Activated naive CD4-positive, alpha-beta T cell treated with anti-CD3 and anti-CD28 coated beads for 36 hours (primary cell): ENCODE measurements at regions of chr15 and their contacts with region 1.

Region 1: GRCh38 chr15:92808978-92809879 is 90.9 kb upstream of the CHD2 start:
- DNase-seq: peak; percentile 99
- H3K4me3 Mint-ChIP-seq: peak overlapping the region; percentile 87
- H3K27ac Mint-ChIP-seq: peak overlapping the region; percentile 99
- H3K4me1 Mint-ChIP-seq: peaks cover 46% of the 10 kb centered on the region
- H3K27me3 Mint-ChIP-seq: no peaks in the 10 kb centered on the region

Region 2: DNA sequence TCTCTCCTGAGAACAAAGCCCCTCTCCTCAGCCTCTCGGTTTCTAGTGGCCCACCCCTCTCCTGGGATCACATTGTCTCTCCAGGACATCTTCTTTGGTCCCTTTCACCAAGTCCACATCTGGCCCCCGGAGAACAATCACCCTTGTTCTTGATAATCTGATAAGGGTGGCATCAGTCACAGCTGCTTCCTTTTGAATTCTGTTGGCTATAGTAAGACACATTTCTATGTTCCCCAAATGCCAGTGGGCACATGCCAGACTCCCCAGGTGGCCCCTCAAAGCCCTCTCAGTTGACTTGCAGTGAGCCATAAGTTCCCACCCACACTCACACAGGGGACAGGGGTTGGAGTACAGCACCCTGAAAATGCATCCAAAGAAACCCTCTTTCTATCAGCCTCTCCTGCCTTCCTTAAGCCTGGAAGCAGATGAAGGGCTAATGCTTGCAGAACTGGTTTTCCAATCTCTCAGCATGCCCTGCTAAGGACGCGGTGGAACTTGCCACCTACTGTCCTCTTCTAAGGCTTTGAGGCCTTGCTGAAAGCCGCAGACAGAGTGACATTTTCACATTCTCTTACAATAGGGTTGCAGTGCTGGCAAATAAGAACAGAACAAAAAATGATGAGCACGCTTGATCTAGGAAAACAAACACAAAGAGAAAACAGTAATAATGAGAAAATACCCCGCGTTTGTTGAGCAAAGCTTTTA is 1057.0 kb before region 1 on chr15:
- CTCF ChIA-PET with region 1: no interaction called
- intact Hi-C with region 1: no loop called
- DNase-seq: no peak
- H3K4me3 Mint-ChIP-seq: no peak overlapping the region
- H3K27ac Mint-ChIP-seq: no peak overlapping the region
- H3K4me1 Mint-ChIP-seq: no peaks in the 10 kb centered on the region
- H3K27me3 Mint-ChIP-seq: peaks cover 9% of the 10 kb centered on the region

Region 3: GRCh38 chr15:92820236-92821021 is 11.2 kb after region 1 on chr15:
- CTCF ChIA-PET with region 1: interaction called, 9 read pairs
- intact Hi-C with region 1: loop called (anchors 1 kb)
- DNase-seq: peak; percentile 91
- H3K4me3 Mint-ChIP-seq: peak overlapping the region; percentile 79
- H3K27ac Mint-ChIP-seq: peak overlapping the region; percentile 98
- H3K4me1 Mint-ChIP-seq: peaks cover 73% of the 10 kb centered on the region
- H3K27me3 Mint-ChIP-seq: no peaks in the 10 kb centered on the region

Region 4: GRCh38 chr15:92831655-92832328 is 22.6 kb after region 1 on chr15:
- CTCF ChIA-PET with region 1: interaction called, 38 read pairs
- intact Hi-C with region 1: loop called (anchors 1 kb)
- DNase-seq: peak; percentile 95
- H3K4me3 Mint-ChIP-seq: peak overlapping the region; percentile 64
- H3K27ac Mint-ChIP-seq: peak overlapping the region; percentile 96
- H3K4me1 Mint-ChIP-seq: peaks cover 64% of the 10 kb centered on the region
- H3K27me3 Mint-ChIP-seq: no peaks in the 10 kb centered on the region

Region 5: GRCh38 chr15:92845126-92845508 is 35.9 kb after region 1 on chr15:
- CTCF ChIA-PET with region 1: interaction called, 3 read pairs
- intact Hi-C with region 1: loop called (anchors 1 kb)
- DNase-seq: no peak
- H3K4me3 Mint-ChIP-seq: peak overlapping the region; percentile 71
- H3K27ac Mint-ChIP-seq: peak overlapping the region; percentile 96
- H3K4me1 Mint-ChIP-seq: peaks cover 85% of the 10 kb centered on the region
- H3K27me3 Mint-ChIP-seq: no peaks in the 10 kb centered on the region

Region 6: GRCh38 chr15:92881802-92882696 is 72.8 kb after region 1 on chr15:
- CTCF ChIA-PET with region 1: interaction called, 17 read pairs
- intact Hi-C with region 1: loop called (anchors 1 kb)
- DNase-seq: peak; percentile 100
- H3K4me3 Mint-ChIP-seq: peak overlapping the region; percentile 95
- H3K27ac Mint-ChIP-seq: peak overlapping the region; percentile 98
- H3K4me1 Mint-ChIP-seq: peaks cover 51% of the 10 kb centered on the region
- H3K27me3 Mint-ChIP-seq: no peaks in the 10 kb centered on the region

Region 7: DNA sequence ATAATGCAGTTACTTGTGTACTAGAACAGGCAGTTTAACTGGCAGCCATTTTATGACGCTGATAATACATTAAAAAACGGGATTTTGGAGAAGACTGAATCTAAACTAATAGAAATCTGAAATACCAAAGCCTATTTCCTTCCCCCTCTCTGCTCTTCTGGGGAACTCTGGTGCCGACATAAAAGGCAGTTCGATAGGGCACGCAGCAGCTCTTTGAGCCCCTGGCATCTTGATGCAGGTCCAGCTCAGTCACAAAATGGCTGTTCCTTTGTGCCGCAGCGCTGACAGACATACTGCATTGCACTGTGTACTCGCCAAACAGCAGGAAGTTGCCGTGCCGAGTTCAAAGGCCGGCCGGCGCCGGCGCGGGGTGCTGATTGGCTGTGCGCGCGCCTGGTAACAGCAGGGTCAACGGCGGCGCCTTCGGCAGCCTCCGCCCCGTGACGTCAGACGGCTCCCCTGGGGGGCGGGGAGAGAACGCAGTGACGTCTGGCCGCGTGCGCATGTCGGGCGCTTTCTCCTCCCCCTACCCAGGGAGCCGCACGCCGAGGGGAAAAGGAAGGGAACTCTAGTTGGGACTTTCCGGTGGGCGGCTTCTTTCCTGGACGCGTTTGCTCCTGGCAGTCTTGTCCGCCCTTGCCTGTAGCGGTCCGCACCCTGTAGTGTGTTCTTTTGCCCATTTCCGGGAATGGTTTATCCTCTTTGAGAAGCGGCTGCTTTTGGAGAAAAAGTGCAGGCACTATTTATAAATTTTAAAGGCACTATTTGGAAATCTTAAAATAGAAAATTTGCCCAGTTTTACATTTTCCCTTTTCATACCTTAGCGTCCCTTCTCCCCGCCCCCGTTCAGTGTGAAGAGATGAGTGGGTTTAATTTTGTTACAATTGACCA is 95.0 kb after region 1 on chr15:
- CTCF ChIA-PET with region 1: interaction called, 30 read pairs
- intact Hi-C with region 1: loop called (anchors 1 kb)
- DNase-seq: peak; percentile 99
- H3K4me3 Mint-ChIP-seq: peak overlapping the region; percentile 92
- H3K27ac Mint-ChIP-seq: peak overlapping the region; percentile 100
- H3K4me1 Mint-ChIP-seq: peaks cover 50% of the 10 kb centered on the region
- H3K27me3 Mint-ChIP-seq: peaks cover 4% of the 10 kb centered on the region

Region 8: DNA sequence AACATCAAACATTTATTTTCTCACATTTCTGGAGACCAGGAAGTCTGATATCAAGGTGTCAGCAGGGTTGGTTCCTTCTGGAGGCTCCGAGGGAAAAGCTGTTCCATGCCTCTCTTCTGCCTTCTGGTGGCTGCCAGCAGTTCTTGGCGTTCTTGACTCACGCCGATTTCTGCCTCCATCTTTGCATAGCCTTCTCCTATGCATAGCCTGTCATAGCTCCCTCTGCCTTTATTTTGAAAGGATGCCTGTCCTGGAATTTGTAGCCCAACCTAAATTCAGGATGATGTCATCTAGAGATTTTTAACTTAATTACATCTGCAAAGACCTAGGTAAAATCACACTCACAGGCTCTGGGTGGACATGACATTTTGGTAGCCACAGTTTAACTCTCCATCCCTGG is 209.4 kb after region 1 on chr15:
- CTCF ChIA-PET with region 1: no interaction called
- intact Hi-C with region 1: loop called (anchors 2 kb)
- DNase-seq: no peak
- H3K4me3 Mint-ChIP-seq: no peak overlapping the region
- H3K27ac Mint-ChIP-seq: peak overlapping the region; percentile 65
- H3K4me1 Mint-ChIP-seq: peaks cover 69% of the 10 kb centered on the region
- H3K27me3 Mint-ChIP-seq: no peaks in the 10 kb centered on the region

Region 9: GRCh38 chr15:93382200-93382820 is 573.1 kb after region 1 on chr15:
- CTCF ChIA-PET with region 1: no interaction called
- intact Hi-C with region 1: no loop called
- DNase-seq: no peak
- H3K4me3 Mint-ChIP-seq: no peak overlapping the region
- H3K27ac Mint-ChIP-seq: no peak overlapping the region
- H3K4me1 Mint-ChIP-seq: no peaks in the 10 kb centered on the region
- H3K27me3 Mint-ChIP-seq: peaks cover 2% of the 10 kb centered on the region

Region 10: DNA sequence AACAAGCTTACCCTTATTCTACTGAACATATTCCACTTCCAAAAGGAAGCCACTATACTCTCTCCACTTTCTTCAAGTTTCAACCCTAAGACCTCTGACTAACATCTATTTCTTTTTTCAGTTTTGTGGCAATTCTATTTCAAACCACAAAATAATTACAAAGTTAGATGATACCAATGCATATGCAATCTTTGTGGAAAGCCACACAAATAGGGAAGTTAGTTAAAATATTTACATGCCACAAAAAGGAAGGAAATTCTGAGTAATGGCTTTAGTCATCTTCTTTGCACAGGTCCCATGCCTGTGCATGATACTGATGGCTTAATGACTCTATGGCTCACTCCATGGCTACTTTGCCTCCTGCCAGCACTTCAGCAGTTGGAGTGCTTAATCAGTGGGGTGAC is 1365.2 kb after region 1 on chr15:
- CTCF ChIA-PET with region 1: no interaction called
- intact Hi-C with region 1: no loop called
- DNase-seq: peak; percentile 26
- H3K4me3 Mint-ChIP-seq: no peak overlapping the region
- H3K27ac Mint-ChIP-seq: peak overlapping the region; percentile 10
- H3K4me1 Mint-ChIP-seq: peaks cover 19% of the 10 kb centered on the region
- H3K27me3 Mint-ChIP-seq: peaks cover 6% of the 10 kb centered on the region